ENCODE measurements at regions of chr5 and their contacts with region 1.

Region 1: GRCh38 chr5:152349683-152350526 is 55.2 kb downstream of the NMUR2 start:
- DNase-seq: peak; percentile 40
- CTCF ChIP-seq: peak; percentile 83

Region 2: DNA sequence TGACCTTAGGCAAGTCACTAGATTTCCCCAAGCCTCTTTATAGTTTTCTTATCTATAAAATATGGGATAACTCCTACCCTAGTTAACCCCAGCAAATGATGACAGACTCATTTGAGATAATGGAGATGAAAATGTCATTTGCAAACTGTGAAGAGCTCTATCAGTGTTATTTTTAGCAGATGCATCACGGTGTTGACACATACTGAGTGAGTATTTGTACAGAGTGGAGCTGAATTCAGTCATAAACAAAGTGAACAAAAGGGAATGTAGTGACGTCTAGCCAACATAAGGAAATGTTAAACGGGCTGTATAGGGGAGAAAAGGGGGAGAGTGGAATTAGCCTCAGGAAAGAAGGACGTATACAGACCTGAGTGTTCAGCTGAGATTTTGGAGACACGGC is 20.7 kb before region 1 on chr5:
- CTCF ChIA-PET with region 1: interaction called, 10 read pairs
- POLR2A ChIA-PET with region 1: no interaction called
- DNase-seq: no peak
- CTCF ChIP-seq: no peak

Region 3: GRCh38 chr5:152335461-152335860 is 14.4 kb before region 1 on chr5:
- CTCF ChIA-PET with region 1: interaction called, 36 read pairs
- POLR2A ChIA-PET with region 1: no interaction called
- DNase-seq: no peak
- CTCF ChIP-seq: no peak

Region 4: DNA sequence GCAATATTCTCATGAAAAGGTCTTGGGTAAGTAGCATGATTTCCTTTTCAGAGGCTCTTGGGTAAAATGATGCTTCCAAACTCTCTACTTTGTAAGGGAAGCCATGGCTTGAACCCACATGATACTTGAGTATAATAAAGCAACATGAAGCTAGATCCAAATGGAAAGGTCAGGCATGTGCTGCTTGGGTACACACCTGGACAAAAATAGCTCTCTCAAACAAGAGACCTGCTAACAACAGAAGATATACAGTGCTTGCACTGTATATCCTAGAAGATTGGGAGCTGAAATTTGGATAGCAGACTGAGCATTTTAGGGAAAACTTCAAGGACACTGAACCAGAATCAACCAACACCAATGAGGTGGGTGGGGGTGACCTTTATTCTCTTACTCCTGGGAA is 15.0 kb after region 1 on chr5:
- CTCF ChIA-PET with region 1: interaction called, 14 read pairs
- POLR2A ChIA-PET with region 1: no interaction called
- DNase-seq: no peak
- CTCF ChIP-seq: no peak

Region 5: GRCh38 chr5:152542741-152543140 is 192.8 kb after region 1 on chr5:
- CTCF ChIA-PET with region 1: no interaction called
- POLR2A ChIA-PET with region 1: no interaction called
- DNase-seq: no peak
- CTCF ChIP-seq: no peak

Measured in GM10248 (cell line).